SK-N-SH (cell line): ENCODE measurements at regions of chr9 and their contacts with region 1.

Region 1: GRCh38 chr9:112717661-112718341 is at the start of gene INIP:
- DNase-seq: peak; percentile 96
- H3K4me3 ChIP-seq: peak within 1 kb of the TSS; percentile 80 to 83
- H3K27ac ChIP-seq: peak within 1 kb of the TSS; percentile 78 to 80
- H3K4me1 ChIP-seq: peaks cover 0 to 8% of the 10 kb centered on the region in 2 experiments; a peak in 2 of 4 replicates
- H3K27me3 ChIP-seq: no peaks in the 10 kb centered on the region
- CTCF ChIP-seq: peak; percentile 30
- EP300 ChIP-seq: no peak
- RAD21 ChIP-seq: peak; percentile 62
- polyA plus RNA-seq, gene INIP: 7.9 and 10.2 TPM in 2 replicates

Region 2: DNA sequence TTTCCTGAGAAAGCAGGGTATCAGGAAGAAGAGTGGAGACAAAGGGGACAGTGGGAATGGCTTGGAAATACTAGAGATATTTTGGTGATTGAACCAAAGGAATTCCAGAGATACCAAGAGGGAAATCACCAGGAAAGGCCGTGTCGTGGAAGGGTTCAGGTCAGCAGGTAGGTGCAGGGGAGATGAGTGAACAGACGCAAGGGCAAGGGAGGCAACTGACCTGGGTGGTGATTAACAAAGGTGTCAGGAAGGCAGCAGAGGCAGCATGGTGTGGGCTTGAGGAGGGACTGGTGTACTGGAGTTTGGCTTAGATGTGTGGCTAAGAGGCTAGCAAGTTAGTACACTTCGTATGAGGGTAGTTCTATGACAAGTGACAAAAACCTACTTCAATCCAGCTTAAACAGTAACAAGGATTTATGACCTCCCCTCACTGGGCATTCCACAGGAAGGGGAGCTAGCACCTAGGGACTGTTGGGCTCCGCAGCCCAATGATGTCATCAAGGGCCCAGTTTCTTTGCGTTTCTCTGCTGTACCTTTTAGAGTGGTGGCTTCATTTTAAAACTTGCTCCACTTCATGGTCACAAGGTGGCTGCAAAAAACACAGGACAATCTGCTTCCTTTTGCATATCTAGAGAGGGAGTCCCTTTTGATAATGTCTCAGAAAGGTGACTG is 36.9 kb before region 1 on chr9:
- CTCF ChIA-PET with region 1: no interaction called
- POLR2A ChIA-PET with region 1: no interaction called
- DNase-seq: no peak
- H3K4me3 ChIP-seq: no peak overlapping the region
- H3K27ac ChIP-seq: no peak overlapping the region
- H3K4me1 ChIP-seq: no peaks in the 10 kb centered on the region
- H3K27me3 ChIP-seq: no peaks in the 10 kb centered on the region
- CTCF ChIP-seq: no peak
- EP300 ChIP-seq: no peak
- RAD21 ChIP-seq: no peak

Region 3: DNA sequence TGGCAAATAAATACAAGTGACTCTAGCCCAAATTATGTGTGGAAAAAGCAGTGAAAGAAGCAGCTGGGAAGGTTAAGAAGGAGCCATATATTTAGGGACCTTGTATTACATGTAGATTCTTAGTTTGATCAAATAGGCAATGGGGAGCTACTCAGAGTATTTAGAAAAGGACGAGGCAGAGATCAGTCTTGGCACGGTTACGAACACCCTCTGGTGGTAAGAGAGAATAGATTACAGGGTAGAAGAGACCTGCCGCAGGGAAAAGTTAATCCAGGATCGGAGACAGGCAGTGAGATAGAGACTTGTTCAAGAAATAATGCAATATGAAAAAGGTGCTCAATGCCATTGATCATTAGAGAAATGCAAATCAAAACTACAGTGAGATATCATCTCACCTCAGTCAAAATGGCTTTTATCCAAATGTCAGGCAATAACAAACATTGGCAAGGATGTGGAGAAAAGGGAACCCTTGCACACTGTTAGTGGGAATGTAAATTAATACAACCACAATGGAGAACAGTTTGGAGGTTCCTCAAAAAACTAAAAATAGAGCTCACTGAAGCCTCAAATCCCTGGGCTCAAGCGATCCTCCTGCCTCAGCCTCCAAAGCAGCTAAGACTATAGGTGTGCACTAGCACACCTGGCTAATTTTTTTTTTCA is 11.9 kb before region 1 on chr9:
- CTCF ChIA-PET with region 1: interaction called, 24 read pairs
- POLR2A ChIA-PET with region 1: no interaction called
- DNase-seq: peak; percentile 14
- H3K4me3 ChIP-seq: no peak overlapping the region
- H3K27ac ChIP-seq: no peak overlapping the region
- H3K4me1 ChIP-seq: no peaks in the 10 kb centered on the region
- H3K27me3 ChIP-seq: no peaks in the 10 kb centered on the region
- CTCF ChIP-seq: peak; percentile 36
- EP300 ChIP-seq: no peak
- RAD21 ChIP-seq: peak; percentile 61

Region 4: GRCh38 chr9:112731971-112732370 is 14.2 kb after region 1 on chr9:
- CTCF ChIA-PET with region 1: interaction called, 10 read pairs
- POLR2A ChIA-PET with region 1: no interaction called
- DNase-seq: no peak
- H3K4me3 ChIP-seq: no peak overlapping the region
- H3K27ac ChIP-seq: no peak overlapping the region
- H3K4me1 ChIP-seq: no peaks in the 10 kb centered on the region
- H3K27me3 ChIP-seq: no peaks in the 10 kb centered on the region
- CTCF ChIP-seq: no peak
- EP300 ChIP-seq: no peak
- RAD21 ChIP-seq: no peak

Region 5: DNA sequence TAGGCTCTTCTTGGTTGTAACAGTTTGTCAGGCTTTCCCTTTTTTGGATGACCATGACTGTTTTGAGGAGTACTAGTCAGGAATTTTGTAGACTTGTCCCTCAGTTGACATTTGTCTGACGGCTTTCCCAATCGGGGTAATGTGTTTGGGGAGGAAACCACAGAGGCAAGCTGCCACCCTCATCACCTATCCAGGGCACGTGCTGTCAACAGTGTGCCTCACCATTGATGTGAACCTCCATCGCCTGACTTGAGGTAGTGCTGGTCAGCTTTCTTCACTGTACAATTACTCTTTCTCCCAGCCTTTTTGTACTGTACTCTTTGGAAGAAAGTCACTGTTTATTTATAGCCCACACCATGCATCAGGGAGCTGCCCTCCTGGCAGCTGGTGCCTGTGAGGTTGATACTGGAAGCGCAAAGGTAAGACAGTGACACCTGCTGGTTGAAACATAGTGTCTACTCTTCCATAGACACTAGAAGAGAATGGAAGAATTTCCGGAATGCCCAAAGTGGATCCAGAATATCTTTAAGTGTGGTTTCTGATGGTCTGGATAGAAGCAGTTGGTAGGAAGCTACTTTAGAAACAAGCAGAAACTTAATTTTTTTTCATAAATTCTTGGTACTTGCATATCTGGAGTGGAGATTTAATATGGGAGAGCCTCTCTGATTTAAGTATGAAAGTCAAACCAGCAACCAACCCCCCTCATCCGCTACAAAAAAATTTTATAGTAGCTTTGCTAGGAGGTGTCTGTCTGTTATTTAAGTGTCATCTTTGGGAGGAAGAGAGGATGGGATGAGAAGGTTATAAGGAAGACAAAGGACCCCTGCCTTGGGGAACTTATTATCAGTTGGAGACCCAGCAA is 102.1 kb after region 1 on chr9:
- CTCF ChIA-PET with region 1: interaction called, 17 read pairs
- POLR2A ChIA-PET with region 1: no interaction called
- DNase-seq: peak; percentile 58
- H3K4me3 ChIP-seq: peak overlapping the region in 1 of 2 experiments; percentile 7; a peak in 1 of 4 replicates
- H3K27ac ChIP-seq: no peak overlapping the region; a peak in 1 of 4 replicates
- H3K4me1 ChIP-seq: peaks cover 0 to 2% of the 10 kb centered on the region in 2 experiments; a peak in 1 of 4 replicates
- H3K27me3 ChIP-seq: no peaks in the 10 kb centered on the region
- CTCF ChIP-seq: peak; percentile 73
- EP300 ChIP-seq: no peak
- RAD21 ChIP-seq: peak; percentile 80